ENCODE measurements at regions of chr2 and their contacts with region 1.

Region 1: DNA sequence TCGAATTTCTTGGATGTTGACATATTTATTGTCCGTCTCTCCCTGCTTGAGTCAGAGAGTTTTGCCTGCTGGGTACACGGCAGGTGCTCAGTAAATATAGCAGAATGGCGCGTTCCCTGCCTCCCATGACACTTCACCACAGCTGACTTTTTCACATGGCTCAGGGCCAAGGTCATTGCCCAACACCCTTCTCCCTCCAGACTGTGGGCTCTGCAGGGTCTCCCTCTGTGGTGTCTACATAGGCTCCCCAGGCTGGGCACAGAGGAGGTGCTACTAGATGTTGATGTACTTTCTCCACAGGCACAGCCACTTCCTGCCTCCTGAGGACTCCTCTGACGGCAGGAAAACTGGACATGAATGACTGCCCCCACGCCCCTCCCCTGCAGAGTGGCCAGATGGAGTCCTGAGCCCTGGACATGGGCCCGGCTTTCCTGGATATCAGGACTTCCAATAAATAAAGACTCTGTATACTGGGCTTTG is 4.2 kb downstream of the CHCHD5 start:
- DNase-seq: peak in 1 of 2 donors; percentile 39
- H3K4me3 ChIP-seq: no peak overlapping the region
- H3K27ac ChIP-seq: no peak overlapping the region
- H3K4me1 ChIP-seq: peaks cover 9 to 13% of the 10 kb centered on the region in 2 donors
- H3K27me3 ChIP-seq: no peaks in the 10 kb centered on the region
- CTCF ChIP-seq: no peak
- POLR2A ChIP-seq: no peak

Region 2: DNA sequence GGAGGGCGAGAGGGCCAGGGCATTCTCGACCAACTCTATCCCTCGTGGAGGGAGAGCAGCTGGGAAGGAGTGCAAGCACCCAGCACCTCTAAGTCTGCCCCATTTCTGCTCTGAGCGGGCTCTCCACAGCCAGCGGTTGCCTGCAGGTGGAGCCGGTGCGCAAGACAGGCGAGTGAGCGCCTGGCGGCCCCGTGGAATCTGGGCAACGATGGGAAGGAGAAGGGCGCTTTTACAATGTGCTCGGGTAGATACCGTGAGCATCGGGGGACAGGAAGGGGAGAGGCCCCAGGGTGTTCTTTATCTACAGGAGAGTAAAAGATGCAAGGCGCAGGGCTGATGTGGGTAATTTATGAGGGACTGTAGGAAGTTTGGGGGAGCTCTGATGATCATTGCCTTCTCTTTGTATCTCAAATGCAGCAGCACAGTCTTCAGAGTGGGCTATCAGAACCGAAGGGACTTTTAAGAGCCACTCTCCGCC is 107.5 kb before region 1 on chr2:
- intact Hi-C with region 1: loop called (anchors 5 kb)
- DNase-seq: peak; percentile 80 to 83
- H3K4me3 ChIP-seq: peak overlapping the region; percentile 21 to 94 (median 80)
- H3K27ac ChIP-seq: peak overlapping the region; percentile 72 to 77 (median 77)
- H3K4me1 ChIP-seq: peaks cover 7 to 17% of the 10 kb centered on the region in 2 donors
- H3K27me3 ChIP-seq: no peaks in the 10 kb centered on the region
- CTCF ChIP-seq: peak; percentile 40 to 88 (median 67)
- POLR2A ChIP-seq: peak in 1 of 2 donors; percentile 9